ENCODE measurements at regions of chr15 and their contacts with region 1.

Region 1: GRCh38 chr15:90214553-90215196 is 13.5 kb downstream of the SEMA4B start:
- DNase-seq: no peak
- H3K4me3 ChIP-seq: no peak overlapping the region
- H3K27ac ChIP-seq: peak overlapping the region; percentile 41
- H3K4me1 ChIP-seq: peaks cover 57% of the 10 kb centered on the region
- H3K27me3 ChIP-seq: no peaks in the 10 kb centered on the region
- CTCF ChIP-seq: peak; percentile 31; the same call in 1 of the 2 replicates

Region 2: GRCh38 chr15:90056529-90056928 is 158.1 kb before region 1 on chr15:
- CTCF ChIA-PET with region 1: no interaction called
- POLR2A ChIA-PET with region 1: no interaction called
- intact Hi-C with region 1: no loop called
- DNase-seq: peak in 1 of 2 experiments; percentile 3
- H3K4me3 ChIP-seq: no peak overlapping the region
- H3K27ac ChIP-seq: no peak overlapping the region
- H3K4me1 ChIP-seq: no peaks in the 10 kb centered on the region
- H3K27me3 ChIP-seq: no peaks in the 10 kb centered on the region
- CTCF ChIP-seq: no peak

Region 3: GRCh38 chr15:90101969-90102890 is 112.4 kb before region 1 on chr15 and contains the start of gene IDH2:
- CTCF ChIA-PET with region 1: interaction called, 6 read pairs
- POLR2A ChIA-PET with region 1: interaction called, 3 read pairs
- intact Hi-C with region 1: loop called (anchors 5 kb)
- DNase-seq: peak; percentile 59 to 84
- H3K4me3 ChIP-seq: peak within 1 kb of the TSS; percentile 80
- H3K27ac ChIP-seq: no peak within 1 kb of the TSS
- H3K4me1 ChIP-seq: peaks cover 89% of the 10 kb centered on the region
- H3K27me3 ChIP-seq: no peaks in the 10 kb centered on the region
- CTCF ChIP-seq: no peak
- total RNA-seq, gene IDH2: 87.9 and 96.7 TPM in 2 replicates

Region 4: DNA sequence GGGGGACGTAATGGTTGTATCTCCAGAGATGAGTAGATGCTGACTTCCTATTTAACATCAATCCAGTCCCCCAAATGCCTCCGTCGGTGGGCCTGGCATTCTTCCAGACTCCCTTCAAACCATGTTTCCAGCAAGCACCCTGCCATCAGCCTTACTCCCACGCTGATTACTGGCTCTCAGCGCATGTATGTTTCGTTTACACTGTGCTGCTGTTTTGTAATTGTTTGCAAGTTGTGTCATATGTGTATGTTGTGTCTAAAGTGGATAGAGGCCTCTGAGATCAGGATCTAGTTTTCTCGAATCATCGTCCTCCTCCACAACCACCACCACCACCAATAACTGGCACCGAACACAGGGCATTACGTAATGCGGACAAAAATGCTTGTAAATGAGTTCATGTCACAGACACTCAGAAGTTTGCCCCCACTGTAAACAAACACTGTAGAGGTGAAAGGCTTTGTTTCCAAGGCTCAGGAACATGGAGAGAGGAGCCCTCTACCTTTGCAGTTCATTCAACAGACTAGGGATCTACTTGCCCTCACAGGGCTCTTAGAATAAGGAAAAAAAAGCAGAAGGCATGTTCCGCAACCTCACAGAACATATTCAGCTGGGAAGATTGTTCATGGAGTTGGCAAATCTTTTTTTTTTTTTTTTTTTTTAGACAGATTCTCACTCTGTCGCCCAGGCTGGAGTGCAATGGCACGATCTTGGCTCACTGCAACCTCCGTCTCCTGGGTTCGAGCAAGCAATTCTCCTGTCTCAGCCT is 59.6 kb before region 1 on chr15:
- CTCF ChIA-PET with region 1: interaction called, 17 read pairs
- POLR2A ChIA-PET with region 1: no interaction called
- intact Hi-C with region 1: no loop called
- DNase-seq: peak in 1 of 2 experiments; percentile 81
- H3K4me3 ChIP-seq: no peak overlapping the region
- H3K27ac ChIP-seq: no peak overlapping the region
- H3K4me1 ChIP-seq: peaks cover 48% of the 10 kb centered on the region
- H3K27me3 ChIP-seq: no peaks in the 10 kb centered on the region
- CTCF ChIP-seq: no peak

Region 5: DNA sequence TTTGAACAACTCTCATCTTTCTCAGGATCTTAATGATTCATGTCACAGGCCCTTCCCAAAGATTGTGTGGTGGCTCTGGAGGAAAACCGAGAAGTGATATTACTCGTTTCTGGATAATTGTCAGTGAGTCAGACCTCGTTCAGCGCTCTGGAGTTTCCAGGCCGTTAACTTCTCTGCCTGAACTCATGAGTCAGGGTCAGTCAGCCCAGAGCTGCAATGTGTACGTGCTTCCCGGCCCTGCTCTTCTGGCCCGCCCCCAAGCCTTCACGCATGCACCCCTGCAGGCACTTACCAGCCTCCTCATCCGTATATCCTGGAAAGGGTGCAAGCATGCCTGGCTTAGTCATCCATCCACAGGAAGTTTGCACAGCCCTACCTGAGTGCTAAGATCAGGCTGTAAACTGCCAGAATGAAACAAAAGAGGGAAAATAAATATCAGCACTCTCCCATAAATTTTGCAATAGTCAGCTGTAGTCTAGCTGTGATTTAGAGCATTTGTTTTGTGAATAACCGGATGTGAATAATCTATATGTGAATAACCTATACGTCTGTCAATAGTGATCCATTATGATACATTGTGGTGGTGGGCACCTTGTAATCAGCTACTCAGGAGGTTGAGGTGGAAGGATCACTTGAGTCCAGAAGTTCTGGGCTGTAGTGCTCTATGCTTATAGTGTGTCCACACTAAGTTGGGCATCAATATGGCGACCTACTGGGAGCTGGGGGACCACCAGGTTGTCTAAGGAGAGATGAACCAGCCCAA is 48.8 kb before region 1 on chr15:
- CTCF ChIA-PET with region 1: interaction called, 3 read pairs
- POLR2A ChIA-PET with region 1: interaction called, 6 read pairs
- intact Hi-C with region 1: loop called (anchors 1 kb)
- DNase-seq: peak; percentile 96 to 99
- H3K4me3 ChIP-seq: peak overlapping the region; percentile 14; the same call in 1 of the 2 replicates
- H3K27ac ChIP-seq: peak overlapping the region; percentile 94
- H3K4me1 ChIP-seq: peaks cover 76% of the 10 kb centered on the region
- H3K27me3 ChIP-seq: no peaks in the 10 kb centered on the region
- CTCF ChIP-seq: no peak

Region 6: GRCh38 chr15:90174140-90174875 is 40.4 kb before region 1 on chr15:
- CTCF ChIA-PET with region 1: no interaction called
- POLR2A ChIA-PET with region 1: interaction called, 10 read pairs
- intact Hi-C with region 1: no loop called
- DNase-seq: no peak
- H3K4me3 ChIP-seq: no peak overlapping the region
- H3K27ac ChIP-seq: no peak overlapping the region
- H3K4me1 ChIP-seq: no peaks in the 10 kb centered on the region
- H3K27me3 ChIP-seq: no peaks in the 10 kb centered on the region
- CTCF ChIP-seq: no peak

Region 7: DNA sequence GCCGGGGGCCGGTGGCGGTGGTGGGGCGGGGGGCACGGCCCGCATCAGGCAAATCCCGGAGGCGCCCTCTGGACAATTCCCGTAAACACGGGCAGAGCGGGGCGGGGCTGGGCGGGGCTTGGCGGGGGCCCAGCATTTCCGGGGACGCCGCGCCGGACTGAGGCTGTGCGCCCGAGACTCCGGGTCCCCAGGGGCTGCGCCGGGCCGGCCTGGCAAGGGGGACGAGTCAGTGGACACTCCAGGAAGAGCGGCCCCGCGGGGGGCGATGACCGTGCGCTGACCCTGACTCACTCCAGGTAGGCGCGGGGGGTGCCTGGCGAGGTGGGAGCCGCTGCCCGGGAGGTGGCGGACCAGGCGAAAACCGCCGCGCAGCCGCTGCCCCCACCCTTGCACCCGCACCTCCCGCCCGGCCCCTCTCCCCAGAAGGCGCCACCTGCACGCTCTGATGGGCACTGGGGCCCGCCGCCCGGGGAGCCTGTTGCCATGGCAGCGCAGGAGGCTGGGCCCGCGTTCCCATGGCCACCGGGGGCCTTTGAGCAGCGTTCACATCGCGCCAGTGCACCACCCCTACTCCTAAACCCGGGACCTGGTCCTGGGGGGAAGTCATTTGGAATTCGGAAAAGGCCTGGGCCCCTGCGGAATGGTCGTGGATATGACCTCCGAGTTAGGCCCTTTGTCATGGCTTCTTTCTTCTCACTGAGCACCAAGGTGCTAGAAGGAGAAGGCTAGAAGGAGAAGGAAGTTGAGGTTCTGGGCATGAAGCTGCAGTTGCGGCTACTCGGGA is 29.7 kb before region 1 on chr15:
- CTCF ChIA-PET with region 1: no interaction called
- POLR2A ChIA-PET with region 1: no interaction called
- intact Hi-C with region 1: loop called (anchors 1 kb)
- DNase-seq: peak; percentile 57 to 72
- H3K4me3 ChIP-seq: peak overlapping the region; percentile 71
- H3K27ac ChIP-seq: peak overlapping the region; percentile 85
- H3K4me1 ChIP-seq: peaks cover 34% of the 10 kb centered on the region
- H3K27me3 ChIP-seq: no peaks in the 10 kb centered on the region
- CTCF ChIP-seq: no peak

Region 8: DNA sequence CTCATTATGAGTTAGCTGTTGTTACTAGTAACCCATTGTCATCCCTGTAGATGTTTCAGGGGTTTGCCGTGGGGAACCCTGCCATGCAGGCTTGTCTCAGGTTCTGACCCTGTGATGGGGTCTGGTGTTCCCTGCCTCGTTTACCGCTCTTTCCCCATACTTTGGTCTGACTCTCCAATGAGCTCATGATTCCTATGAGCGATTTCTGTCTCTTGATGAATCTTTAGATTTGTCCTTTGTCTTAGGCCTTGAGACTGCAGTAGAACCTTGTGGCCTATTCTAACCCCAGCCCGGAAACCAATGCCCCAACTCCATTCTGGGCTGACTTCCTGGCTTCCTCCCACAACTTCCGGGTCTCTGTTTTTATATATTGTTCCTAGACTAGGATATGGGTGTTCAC is 162.1 kb after region 1 on chr15:
- CTCF ChIA-PET with region 1: no interaction called
- POLR2A ChIA-PET with region 1: no interaction called
- intact Hi-C with region 1: no loop called
- DNase-seq: no peak
- H3K4me3 ChIP-seq: no peak overlapping the region
- H3K27ac ChIP-seq: no peak overlapping the region
- H3K4me1 ChIP-seq: no peaks in the 10 kb centered on the region
- H3K27me3 ChIP-seq: no peaks in the 10 kb centered on the region
- CTCF ChIP-seq: no peak